PC-9 (cell line): ENCODE measurements at regions of chr5 and their contacts with region 1.

Region 1: DNA sequence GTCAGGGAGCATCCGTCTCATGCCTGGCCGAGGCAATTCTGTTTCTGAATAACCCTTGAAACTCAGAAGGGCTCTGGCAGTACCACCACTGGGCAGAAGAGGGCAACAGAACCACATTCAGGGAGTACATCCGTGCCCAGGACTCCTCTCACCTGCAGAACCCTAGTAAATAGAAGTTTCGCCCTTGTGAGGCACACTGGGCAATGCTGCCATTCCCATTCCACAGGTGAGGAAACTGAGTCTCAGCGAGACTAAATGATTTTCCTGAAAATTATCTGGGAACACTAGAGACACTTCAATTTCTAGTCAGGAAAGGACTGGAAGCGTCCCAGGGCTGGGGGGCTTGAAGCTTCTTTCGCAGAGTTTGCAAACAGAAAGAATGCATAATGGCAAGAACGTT is 74.7 kb downstream of the FGF1 start:
- DNase-seq: peak; percentile 49 to 72
- H3K4me3 ChIP-seq: no peak overlapping the region
- H3K27ac ChIP-seq: no peak overlapping the region
- H3K4me1 ChIP-seq: no peaks in the 10 kb centered on the region
- H3K27me3 ChIP-seq: no peaks in the 10 kb centered on the region
- CTCF ChIP-seq: peak; percentile 79

Region 2: DNA sequence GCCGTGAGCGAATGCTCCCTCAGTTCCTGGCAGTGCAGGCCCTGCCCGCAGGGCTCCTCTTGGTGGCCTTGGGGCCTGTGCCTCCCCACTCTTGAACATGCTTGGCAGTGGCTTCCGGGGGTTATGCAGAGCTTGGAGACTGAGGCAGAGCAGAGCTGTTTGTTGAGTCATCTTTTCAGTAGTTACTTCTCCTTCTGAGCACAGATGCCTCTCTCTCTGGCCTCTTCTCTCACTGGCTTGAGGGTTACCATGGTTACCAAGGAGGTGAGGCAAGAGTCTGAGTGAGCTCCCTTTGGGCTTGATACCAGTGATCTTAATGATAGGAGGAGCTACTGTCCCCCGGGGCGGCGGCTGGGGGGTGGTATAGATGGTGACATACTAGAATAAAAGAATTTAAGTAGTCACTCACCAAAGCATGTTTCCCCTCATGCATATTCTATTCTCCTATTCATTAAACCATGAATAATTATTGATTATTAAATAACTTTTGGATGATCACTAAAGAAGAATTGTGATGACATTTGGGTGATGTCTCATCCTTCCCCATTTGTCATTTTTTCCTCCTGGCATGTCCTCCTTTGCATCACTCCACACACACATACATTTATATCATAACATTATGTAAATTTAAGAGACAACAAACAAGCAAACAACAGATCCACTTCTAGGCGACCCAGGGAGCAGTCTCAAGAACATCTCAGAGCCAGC is 270.1 kb after region 1 on chr5:
- CTCF ChIA-PET with region 1: no interaction called
- POLR2A ChIA-PET with region 1: no interaction called
- intact Hi-C with region 1: loop called (anchors 2 kb)
- DNase-seq: no peak
- H3K4me3 ChIP-seq: no peak overlapping the region
- H3K27ac ChIP-seq: no peak overlapping the region
- H3K4me1 ChIP-seq: peaks cover 13% of the 10 kb centered on the region
- H3K27me3 ChIP-seq: no peaks in the 10 kb centered on the region
- CTCF ChIP-seq: no peak